ENCODE measurements at regions of chr1 and their contacts with region 1.

Region 1: GRCh38 chr1:22892789-22893188 is 79.9 kb downstream of the LACTBL1 start:
- DNase-seq: no peak
- H3K4me3 ChIP-seq: no peak overlapping the region
- CTCF ChIP-seq: no peak
- POLR2A ChIP-seq: no peak

Region 2: GRCh38 chr1:22704440-22705067 is 188.2 kb before region 1 on chr1:
- intact Hi-C with region 1: loop called (anchors 10 kb)
- DNase-seq: peak; percentile 80 to 96
- H3K4me3 ChIP-seq: no peak overlapping the region
- CTCF ChIP-seq: peak in 1 of 3 donors; percentile 72
- POLR2A ChIP-seq: no peak

Region 3: GRCh38 chr1:22739648-22740385 is 153.0 kb before region 1 on chr1:
- intact Hi-C with region 1: no loop called
- DNase-seq: peak in 1 of 2 donors; percentile 37
- H3K4me3 ChIP-seq: no peak overlapping the region
- CTCF ChIP-seq: no peak
- POLR2A ChIP-seq: no peak